Activated naive CD4-positive, alpha-beta T cell treated with anti-CD3 and anti-CD28 coated beads, Interleukin-2, amount 10 ng/mL, durations not matched to agents 7 days and 5 days (primary cell): ENCODE measurements at regions of chr11 and their contacts with region 1.

Region 1: GRCh38 chr11:65888163-65888814 is at the start of gene FIBP:
- DNase-seq: peak; percentile 98
- H3K4me3 Mint-ChIP-seq: peak within 1 kb of the TSS; percentile 96
- H3K27ac Mint-ChIP-seq: peak within 1 kb of the TSS; percentile 94
- H3K4me1 Mint-ChIP-seq: peaks cover 74% of the 10 kb centered on the region
- H3K27me3 Mint-ChIP-seq: no peaks in the 10 kb centered on the region

Region 2: DNA sequence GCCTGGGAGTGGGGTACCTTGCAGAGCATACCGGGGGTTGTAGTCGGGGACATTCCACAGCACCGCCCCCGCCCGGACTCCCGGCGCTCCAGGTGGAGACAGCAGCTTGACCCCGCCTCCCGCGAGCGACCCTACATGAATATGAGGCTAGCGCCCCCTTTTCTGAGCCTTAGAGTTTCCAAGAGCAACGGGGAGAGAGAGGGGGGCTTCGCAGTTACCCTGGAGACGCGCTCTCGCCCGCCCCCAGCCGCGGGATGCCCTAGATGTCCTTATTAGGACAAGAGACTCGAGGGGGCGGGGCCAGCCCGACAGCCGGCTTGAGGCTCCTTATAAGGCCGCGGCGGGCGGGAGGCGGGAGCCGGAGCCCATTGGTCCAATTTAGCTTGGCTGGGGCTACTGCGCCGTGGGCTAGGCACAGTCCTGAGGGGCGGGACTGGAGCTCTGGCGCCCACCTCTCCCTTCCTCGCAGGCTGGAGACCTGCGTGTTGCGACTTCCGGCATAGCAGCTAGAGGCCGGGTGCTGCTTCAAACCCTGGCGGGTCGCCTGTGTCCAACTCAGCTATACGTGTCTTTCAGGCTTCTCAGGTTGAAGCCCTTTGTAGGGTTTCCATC is 29.0 kb before region 1 on chr11:
- CTCF ChIA-PET with region 1: interaction called, 107 read pairs
- DNase-seq: peak; percentile 100
- H3K4me3 Mint-ChIP-seq: peak overlapping the region; percentile 94
- H3K27ac Mint-ChIP-seq: peak overlapping the region; percentile 99
- H3K4me1 Mint-ChIP-seq: peaks cover 58% of the 10 kb centered on the region
- H3K27me3 Mint-ChIP-seq: no peaks in the 10 kb centered on the region

Region 3: DNA sequence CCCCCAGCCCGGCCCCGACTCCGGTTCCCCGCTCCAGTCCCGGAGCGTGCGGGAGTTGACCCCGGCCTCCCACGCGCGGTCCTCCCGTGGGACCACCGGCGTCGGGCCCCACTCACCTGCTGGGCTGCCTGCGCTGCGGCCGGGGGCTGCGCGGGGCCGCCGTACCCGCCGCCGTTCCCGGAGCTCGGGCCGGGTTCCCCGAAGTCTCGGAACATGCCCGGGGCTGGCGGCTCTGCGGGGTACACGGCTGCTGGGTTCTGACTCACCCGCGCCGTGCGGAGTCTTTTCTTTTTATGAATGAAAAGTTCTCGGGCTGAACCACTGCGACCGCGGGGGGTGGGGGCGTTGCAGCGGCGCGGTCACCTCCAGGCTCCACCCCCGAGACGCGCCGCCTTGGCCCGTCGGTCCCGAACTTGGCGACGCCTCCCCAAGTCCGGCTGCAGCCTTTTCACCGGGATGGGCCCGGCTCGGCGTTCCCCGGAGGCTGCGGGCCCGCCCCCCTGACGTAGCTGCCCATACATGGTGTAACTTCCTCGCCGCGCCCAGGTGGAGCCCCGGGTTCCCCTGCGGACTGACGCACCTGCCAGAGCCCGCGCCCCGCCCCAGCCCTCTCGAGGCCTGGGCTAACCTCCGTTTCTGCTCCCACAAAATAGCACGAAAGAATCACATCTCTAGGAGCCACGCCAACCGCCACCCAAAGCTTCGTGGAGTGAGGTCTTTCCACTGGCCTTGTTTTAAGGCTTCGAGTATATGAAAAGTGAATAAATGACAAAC is 12.0 kb after region 1 on chr11 and contains the start of gene FOSL1:
- CTCF ChIA-PET with region 1: interaction called, 142 read pairs
- DNase-seq: peak; percentile 96
- H3K4me3 Mint-ChIP-seq: peak within 1 kb of the TSS; percentile 69
- H3K27ac Mint-ChIP-seq: peak within 1 kb of the TSS; percentile 73
- H3K4me1 Mint-ChIP-seq: peaks cover 40% of the 10 kb centered on the region
- H3K27me3 Mint-ChIP-seq: peaks cover 52% of the 10 kb centered on the region

Region 4: GRCh38 chr11:65911682-65912568 is 23.6 kb after region 1 on chr11:
- CTCF ChIA-PET with region 1: interaction called, 14 read pairs
- DNase-seq: no peak
- H3K4me3 Mint-ChIP-seq: no peak overlapping the region
- H3K27ac Mint-ChIP-seq: no peak overlapping the region
- H3K4me1 Mint-ChIP-seq: peaks cover 25% of the 10 kb centered on the region
- H3K27me3 Mint-ChIP-seq: peaks cover 44% of the 10 kb centered on the region

Region 5: GRCh38 chr11:65927904-65928397 is 39.7 kb after region 1 on chr11:
- CTCF ChIA-PET with region 1: interaction called, 21 read pairs
- DNase-seq: peak; percentile 92
- H3K4me3 Mint-ChIP-seq: peak overlapping the region; percentile 65
- H3K27ac Mint-ChIP-seq: peak overlapping the region; percentile 98
- H3K4me1 Mint-ChIP-seq: peaks cover 60% of the 10 kb centered on the region
- H3K27me3 Mint-ChIP-seq: no peaks in the 10 kb centered on the region